Caco-2 (cell line): ENCODE measurements at regions of chr6 and their contacts with region 1.

Region 1: DNA sequence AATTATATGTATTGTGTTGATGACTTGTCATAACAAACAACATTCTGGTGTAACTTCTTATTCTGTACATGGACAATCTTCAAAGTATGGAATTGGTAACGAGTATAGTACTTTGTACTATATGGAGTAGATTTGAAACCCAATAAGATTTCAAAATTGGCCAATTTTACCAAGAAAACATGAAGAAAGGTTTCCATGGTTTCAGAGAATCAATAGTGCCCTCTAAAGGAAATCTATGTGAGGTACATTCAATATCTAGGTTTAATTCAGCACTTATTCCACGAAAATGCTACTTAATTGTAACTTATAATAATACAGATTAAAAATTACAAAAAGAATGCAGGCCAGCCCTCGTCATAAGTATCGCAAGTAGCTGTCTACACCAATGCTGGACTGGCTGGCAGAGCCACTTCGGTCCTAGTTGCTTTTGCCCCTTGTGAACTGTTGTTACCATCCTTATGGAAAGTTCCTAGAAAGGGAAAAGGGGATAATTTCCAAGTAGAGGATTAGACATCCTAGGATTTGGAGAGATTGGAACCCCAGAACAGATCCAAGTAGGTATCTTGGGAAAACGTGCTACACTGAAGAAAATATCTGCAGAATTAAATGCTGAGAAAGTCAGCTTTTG is 70.9 kb downstream of the LCA5 start:
- DNase-seq: no peak
- H3K4me3 ChIP-seq: no peak overlapping the region
- H3K4me3 Mint-ChIP-seq: no peak overlapping the region
- H3K27ac Mint-ChIP-seq: peak overlapping the region; percentile 57
- H3K4me1 ChIP-seq: peaks cover 88% of the 10 kb centered on the region
- H3K4me1 Mint-ChIP-seq: peaks cover 53% of the 10 kb centered on the region
- H3K27me3 ChIP-seq: no peaks in the 10 kb centered on the region
- H3K27me3 Mint-ChIP-seq: no peaks in the 10 kb centered on the region
- CTCF ChIP-seq: peak; percentile 35 to 51

Region 2: GRCh38 chr6:79078075-79079025 is 388.0 kb before region 1 on chr6 and contains the start of gene PHIP:
- CTCF ChIA-PET with region 1: interaction called, 3 read pairs
- POLR2A ChIA-PET with region 1: no interaction called
- intact Hi-C with region 1: loop called (anchors 1 kb)
- DNase-seq: peak; percentile 94
- H3K4me3 ChIP-seq: peak within 1 kb of the TSS; percentile 79
- H3K4me3 Mint-ChIP-seq: peak within 1 kb of the TSS; percentile 88
- H3K27ac Mint-ChIP-seq: peak within 1 kb of the TSS; percentile 96
- H3K4me1 ChIP-seq: no peaks in the 10 kb centered on the region; the same call in 1 of the 2 replicates
- H3K4me1 Mint-ChIP-seq: peaks cover 7% of the 10 kb centered on the region
- H3K27me3 ChIP-seq: no peaks in the 10 kb centered on the region
- H3K27me3 Mint-ChIP-seq: no peaks in the 10 kb centered on the region
- CTCF ChIP-seq: no peak
- total RNA-seq, gene PHIP: 31.2 and 32.6 TPM in 2 replicates

Region 3: DNA sequence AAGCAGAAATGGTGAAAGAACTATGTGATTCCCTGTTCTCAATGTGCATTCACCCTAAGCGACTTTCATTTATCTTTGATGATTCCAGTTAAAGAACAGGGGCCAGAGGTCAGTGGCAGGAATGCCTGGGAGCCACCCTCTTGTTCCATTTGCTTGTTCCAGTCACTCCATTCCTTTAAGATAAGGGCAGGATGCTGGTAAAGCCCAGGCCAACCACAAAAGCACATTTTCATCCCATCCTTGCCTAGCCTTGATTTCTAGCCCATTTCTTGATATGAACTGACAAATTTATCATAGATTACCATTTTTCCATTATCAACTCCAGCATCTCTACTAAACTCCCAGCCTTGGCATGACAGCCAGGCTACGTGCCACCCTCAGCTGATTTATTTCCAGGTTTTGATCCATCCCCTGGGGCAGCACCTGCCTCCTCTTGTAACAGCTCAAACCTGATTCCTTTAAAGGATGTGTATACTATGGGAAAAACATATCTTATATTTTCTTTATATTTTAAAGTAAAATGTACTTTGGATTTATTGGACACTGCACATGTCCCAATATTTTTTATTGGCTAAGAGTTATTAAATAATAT is 251.0 kb before region 1 on chr6:
- CTCF ChIA-PET with region 1: no interaction called
- POLR2A ChIA-PET with region 1: no interaction called
- intact Hi-C with region 1: loop called (anchors 2 kb)
- DNase-seq: peak; percentile 72 to 76
- H3K4me3 ChIP-seq: no peak overlapping the region
- H3K4me3 Mint-ChIP-seq: peak overlapping the region; percentile 40
- H3K27ac Mint-ChIP-seq: peak overlapping the region; percentile 67
- H3K4me1 ChIP-seq: peaks cover 41% of the 10 kb centered on the region
- H3K4me1 Mint-ChIP-seq: peaks cover 27% of the 10 kb centered on the region
- H3K27me3 ChIP-seq: no peaks in the 10 kb centered on the region
- H3K27me3 Mint-ChIP-seq: no peaks in the 10 kb centered on the region
- CTCF ChIP-seq: no peak

Region 4: DNA sequence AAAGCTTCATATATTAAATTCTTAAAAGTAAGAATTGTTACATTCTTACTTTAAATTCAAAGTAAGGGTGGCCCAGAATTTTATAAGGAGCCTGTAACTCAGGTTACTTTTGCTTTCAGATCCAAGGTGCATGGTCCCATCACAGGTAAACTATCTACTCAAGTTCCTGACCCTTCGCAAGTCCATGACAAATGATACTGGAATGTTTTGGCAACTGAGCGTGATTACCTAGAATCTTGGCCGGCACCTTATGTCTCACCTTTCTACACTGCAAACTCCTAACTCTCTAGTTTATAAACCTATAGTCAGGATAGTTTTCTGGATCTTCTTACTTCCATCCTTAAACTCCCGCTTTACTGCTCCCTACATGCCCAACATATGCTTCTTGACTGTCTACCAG is 164.0 kb before region 1 on chr6:
- CTCF ChIA-PET with region 1: no interaction called
- POLR2A ChIA-PET with region 1: no interaction called
- intact Hi-C with region 1: loop called (anchors 1 kb)
- DNase-seq: no peak
- H3K4me3 ChIP-seq: no peak overlapping the region
- H3K4me3 Mint-ChIP-seq: no peak overlapping the region
- H3K27ac Mint-ChIP-seq: peak overlapping the region; percentile 68
- H3K4me1 ChIP-seq: peaks cover 48% of the 10 kb centered on the region
- H3K4me1 Mint-ChIP-seq: peaks cover 15% of the 10 kb centered on the region
- H3K27me3 ChIP-seq: no peaks in the 10 kb centered on the region
- H3K27me3 Mint-ChIP-seq: no peaks in the 10 kb centered on the region
- CTCF ChIP-seq: no peak

Region 5: DNA sequence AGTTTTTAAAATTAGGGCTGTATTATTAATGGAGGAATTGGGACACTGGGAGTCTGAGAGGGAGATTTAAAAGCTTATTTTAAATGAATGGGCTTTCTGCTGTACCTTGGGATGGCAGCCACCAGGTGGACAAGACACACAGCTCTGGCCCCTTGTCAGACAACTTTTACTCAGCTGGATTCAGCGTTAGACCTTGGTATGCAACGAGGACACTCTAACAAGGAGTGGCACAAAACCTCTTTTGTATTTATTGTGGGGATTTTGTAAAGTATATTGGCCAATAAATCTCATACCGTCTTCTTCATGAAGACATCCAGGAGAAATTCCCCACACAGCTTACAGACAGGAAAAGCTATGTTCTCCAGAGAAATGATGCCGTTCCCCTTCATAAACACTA is 34.8 kb before region 1 on chr6:
- CTCF ChIA-PET with region 1: interaction called, 6 read pairs
- POLR2A ChIA-PET with region 1: interaction called, 3 read pairs
- intact Hi-C with region 1: loop called (anchors 1 kb)
- DNase-seq: peak; percentile 61 to 69
- H3K4me3 ChIP-seq: no peak overlapping the region
- H3K4me3 Mint-ChIP-seq: peak overlapping the region; percentile 10
- H3K27ac Mint-ChIP-seq: peak overlapping the region; percentile 41
- H3K4me1 ChIP-seq: peaks cover 37% of the 10 kb centered on the region
- H3K4me1 Mint-ChIP-seq: peaks cover 24% of the 10 kb centered on the region
- H3K27me3 ChIP-seq: no peaks in the 10 kb centered on the region
- H3K27me3 Mint-ChIP-seq: no peaks in the 10 kb centered on the region
- CTCF ChIP-seq: peak; percentile 62 to 67

Region 6: DNA sequence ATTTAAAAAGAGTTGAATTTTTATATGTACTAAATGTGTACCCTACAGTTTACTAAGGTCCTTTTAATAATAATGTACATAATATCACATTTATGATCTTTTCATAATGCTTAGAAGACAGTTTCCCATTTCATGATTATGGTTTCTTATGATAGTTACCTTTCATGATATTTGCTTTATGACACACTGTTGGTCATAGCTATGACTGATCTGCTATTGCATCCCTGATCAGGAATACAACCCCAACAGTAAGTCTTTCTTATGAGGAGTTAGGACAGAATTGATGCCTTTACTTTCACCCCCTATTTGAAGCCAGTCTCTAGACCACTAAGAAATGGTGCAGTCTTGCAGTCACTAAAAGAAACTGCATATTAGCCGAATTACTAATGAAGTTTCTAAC is 39.9 kb after region 1 on chr6:
- CTCF ChIA-PET with region 1: no interaction called
- POLR2A ChIA-PET with region 1: no interaction called
- intact Hi-C with region 1: no loop called
- DNase-seq: no peak
- H3K4me3 ChIP-seq: no peak overlapping the region
- H3K4me3 Mint-ChIP-seq: no peak overlapping the region
- H3K27ac Mint-ChIP-seq: no peak overlapping the region
- H3K4me1 ChIP-seq: peaks cover 7% of the 10 kb centered on the region; the same call in 1 of the 2 replicates
- H3K4me1 Mint-ChIP-seq: no peaks in the 10 kb centered on the region
- H3K27me3 ChIP-seq: no peaks in the 10 kb centered on the region
- H3K27me3 Mint-ChIP-seq: no peaks in the 10 kb centered on the region
- CTCF ChIP-seq: no peak

Region 7: GRCh38 chr6:79713701-79714322 is 247.5 kb after region 1 on chr6:
- CTCF ChIA-PET with region 1: no interaction called
- POLR2A ChIA-PET with region 1: no interaction called
- intact Hi-C with region 1: loop called (anchors 2 kb)
- DNase-seq: peak; percentile 46 to 67
- H3K4me3 ChIP-seq: no peak overlapping the region
- H3K4me3 Mint-ChIP-seq: no peak overlapping the region
- H3K27ac Mint-ChIP-seq: no peak overlapping the region
- H3K4me1 ChIP-seq: peaks cover 11% of the 10 kb centered on the region
- H3K4me1 Mint-ChIP-seq: peaks cover 24% of the 10 kb centered on the region
- H3K27me3 ChIP-seq: no peaks in the 10 kb centered on the region
- H3K27me3 Mint-ChIP-seq: no peaks in the 10 kb centered on the region
- CTCF ChIP-seq: peak; percentile 72 to 80